HAP-1 (cell line): ENCODE measurements at regions of chr4 and their contacts with region 1.

Region 1: GRCh38 chr4:125314676-125315575 is at the start of gene FAT4:
- DNase-seq: peak; percentile 92 to 95
- H3K4me3 ChIP-seq: peak within 1 kb of the TSS; percentile 72
- H3K4me1 ChIP-seq: peaks cover 13% of the 10 kb centered on the region
- H3K27me3 ChIP-seq: no peaks in the 10 kb centered on the region

Region 2: DNA sequence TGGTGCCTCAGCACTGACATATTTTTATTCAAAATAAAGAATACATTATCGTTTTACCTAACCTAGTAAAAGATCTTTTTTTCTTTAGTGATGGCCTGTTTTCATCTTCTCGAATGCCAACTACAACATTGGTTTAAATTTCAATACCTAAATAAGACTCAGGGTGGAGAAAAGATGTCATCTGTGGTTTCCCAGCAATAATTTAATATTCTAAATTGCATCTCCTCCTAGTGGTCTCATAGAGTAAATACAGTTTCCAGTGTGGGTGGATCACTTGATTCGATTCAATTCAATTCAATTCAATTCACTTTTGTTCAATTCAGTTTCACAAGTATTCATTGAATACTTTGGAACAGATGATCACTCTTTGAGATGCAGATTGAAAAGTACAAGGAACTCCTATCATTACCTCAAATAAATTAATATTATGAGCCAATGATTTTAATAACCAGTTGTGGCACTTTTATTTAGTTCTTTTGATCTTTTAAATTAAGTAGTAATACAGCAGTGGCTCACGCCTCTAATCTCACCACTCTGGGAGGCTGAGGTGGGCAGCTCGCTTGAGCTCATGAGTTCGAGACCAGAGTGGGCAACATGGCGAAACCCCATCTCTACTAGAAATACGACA is 427.0 kb after region 1 on chr4:
- in situ Hi-C with region 1: loop called (anchors 10 kb)
- DNase-seq: peak in 1 of 2 experiments; percentile 39
- H3K4me3 ChIP-seq: no peak overlapping the region
- H3K4me1 ChIP-seq: no peaks in the 10 kb centered on the region
- H3K27me3 ChIP-seq: no peaks in the 10 kb centered on the region

Region 3: DNA sequence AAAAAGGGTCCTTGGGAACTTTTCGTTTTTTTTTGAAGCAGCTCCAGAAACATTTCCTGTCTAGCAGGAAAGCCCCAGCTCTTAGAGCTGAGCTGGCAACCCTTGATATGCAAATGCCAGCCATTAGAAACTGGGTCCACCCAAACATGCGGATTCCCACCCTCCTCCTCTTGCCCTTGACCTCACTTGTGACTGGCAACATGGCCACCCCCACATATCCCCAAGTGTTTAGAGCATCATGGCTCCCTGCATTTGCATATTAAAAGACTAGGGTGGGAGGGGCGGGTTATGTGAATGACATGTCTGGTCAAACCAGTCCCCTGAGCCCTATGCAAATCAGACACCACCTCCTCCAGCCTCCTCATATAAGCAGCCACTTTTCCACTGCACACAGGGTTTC is 670.9 kb after region 1 on chr4:
- in situ Hi-C with region 1: loop called (anchors 25 kb)
- DNase-seq: peak; percentile 53 to 77
- H3K4me3 ChIP-seq: no peak overlapping the region
- H3K4me1 ChIP-seq: peaks cover 11% of the 10 kb centered on the region
- H3K27me3 ChIP-seq: no peaks in the 10 kb centered on the region

Region 4: GRCh38 chr4:126583509-126583908 is 1268.6 kb after region 1 on chr4:
- in situ Hi-C with region 1: loop called (anchors 25 kb)
- DNase-seq: peak; percentile 53 to 54
- H3K4me3 ChIP-seq: no peak overlapping the region
- H3K4me1 ChIP-seq: no peaks in the 10 kb centered on the region
- H3K27me3 ChIP-seq: no peaks in the 10 kb centered on the region